Activated T-helper 2 cell treated with anti-CD3 and anti-CD28 coated beads, Interferon-gamma antibody, Interleukin-2, Interleukin-4, amounts not matched to agents 10 μg/mL and 5 μg/mL and 100 μg/mL, durations not matched to agents 14 hours and 24 hours and 36 hours (primary cell): ENCODE measurements at regions of chr7 and their contacts with region 1.

Region 1: DNA sequence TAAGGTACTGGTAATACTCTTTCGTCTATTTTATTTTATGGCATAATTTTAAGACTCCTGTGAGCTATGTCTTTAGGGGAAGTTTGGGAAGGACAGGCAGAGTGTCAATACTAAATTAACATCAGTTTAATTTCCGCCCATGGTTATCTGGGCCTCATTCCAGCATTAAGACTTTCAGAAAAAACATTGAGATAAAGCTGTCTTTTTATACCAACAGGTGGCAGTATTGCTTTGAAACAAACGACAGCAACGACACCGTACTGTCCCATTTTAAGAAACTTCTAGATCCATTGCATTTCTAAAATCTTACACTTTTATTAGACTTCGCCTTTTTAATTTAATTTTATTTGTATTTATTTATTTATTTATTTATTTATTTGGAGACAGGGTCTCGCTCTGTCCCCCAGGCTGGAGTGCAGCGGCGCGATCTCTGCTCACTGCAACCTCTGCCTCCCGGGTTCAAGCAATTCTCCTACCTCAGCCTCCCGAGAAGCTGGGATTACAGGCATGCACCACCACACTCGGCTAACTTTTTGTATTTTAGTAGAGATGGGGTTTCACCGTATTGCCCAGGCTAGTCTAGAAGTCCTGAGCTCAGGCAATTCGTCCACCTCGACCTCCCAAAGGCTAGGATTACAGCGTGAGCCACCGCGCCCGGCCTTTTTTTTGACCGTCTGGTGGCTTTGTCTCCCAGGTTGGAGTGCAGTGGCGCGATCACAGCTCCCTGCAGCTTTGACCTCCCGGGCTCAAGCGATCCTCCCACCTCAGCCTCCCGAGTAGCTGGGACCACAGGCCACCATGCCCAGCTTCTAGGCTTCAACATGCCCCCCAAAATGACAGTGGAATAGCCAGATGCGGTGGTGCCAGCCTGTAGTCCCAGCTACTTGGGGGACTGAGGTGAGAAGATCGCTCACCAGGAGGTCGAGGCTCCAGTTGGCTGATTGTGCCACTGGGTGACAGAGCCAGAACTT is 78.7 kb upstream of the C1GALT1 start:
- DNase-seq: no peak
- H3K4me3 Mint-ChIP-seq: no peak overlapping the region
- H3K27ac Mint-ChIP-seq: no peak overlapping the region
- H3K4me1 Mint-ChIP-seq: peaks cover 21% of the 10 kb centered on the region
- H3K27me3 Mint-ChIP-seq: peaks cover 12% of the 10 kb centered on the region

Region 2: DNA sequence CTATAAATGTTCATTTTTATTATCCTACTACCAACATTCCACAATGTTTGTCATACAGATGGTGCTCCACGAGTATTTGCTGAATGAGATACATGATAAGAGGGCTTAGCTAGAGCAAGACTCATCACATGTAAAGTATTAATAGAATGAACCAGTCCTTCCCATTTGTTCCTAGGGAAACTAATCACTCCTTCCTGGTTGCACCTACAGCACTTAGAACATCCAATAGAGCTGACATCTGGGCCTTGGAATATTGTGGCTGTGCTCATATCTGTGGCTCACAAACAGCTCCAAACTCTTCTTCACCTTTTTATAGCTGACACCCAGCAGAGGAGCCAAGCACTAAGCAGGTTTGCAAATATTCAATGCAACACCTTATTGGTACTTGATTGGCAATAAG is 13.2 kb before region 1 on chr7:
- intact Hi-C with region 1: no loop called
- DNase-seq: no peak
- H3K4me3 Mint-ChIP-seq: no peak overlapping the region
- H3K27ac Mint-ChIP-seq: no peak overlapping the region
- H3K4me1 Mint-ChIP-seq: no peaks in the 10 kb centered on the region
- H3K27me3 Mint-ChIP-seq: peaks cover 21% of the 10 kb centered on the region

Region 3: DNA sequence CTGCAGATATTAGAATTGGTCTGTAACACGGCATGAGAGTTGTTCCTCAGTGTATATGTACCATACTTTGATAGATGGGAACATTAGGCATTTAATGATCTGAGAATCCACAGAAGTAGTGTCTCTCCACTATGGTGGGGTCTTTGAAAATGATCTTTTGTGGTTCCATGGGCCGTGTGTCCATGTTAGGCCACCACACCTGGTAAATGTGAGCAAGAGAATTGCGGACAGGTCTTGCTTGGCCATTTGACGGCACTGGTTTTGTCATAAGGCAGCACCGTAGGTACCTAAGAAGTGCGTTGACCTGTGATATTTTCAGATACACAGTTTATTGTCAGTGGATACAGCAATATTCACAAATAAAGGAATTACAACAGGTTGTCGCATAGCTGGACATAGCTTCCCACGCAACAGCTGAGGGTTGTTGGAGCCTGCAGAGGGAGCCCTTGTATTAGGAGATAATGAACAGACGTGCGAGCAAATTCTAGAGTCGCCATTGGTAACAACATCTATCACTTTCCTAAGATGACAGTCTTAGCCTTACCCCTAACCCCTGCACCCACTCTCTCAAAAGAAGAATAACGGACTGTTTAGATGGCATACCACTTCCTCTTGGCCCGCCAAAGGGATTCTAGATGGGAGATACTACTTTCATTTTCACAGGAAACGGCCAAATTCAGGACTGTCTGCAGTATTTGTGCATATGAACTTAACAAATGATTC is 320.7 kb after region 1 on chr7:
- intact Hi-C with region 1: loop called (anchors 10 kb)
- DNase-seq: peak; percentile 12
- H3K4me3 Mint-ChIP-seq: peak overlapping the region; percentile 60
- H3K27ac Mint-ChIP-seq: no peak overlapping the region
- H3K4me1 Mint-ChIP-seq: peaks cover 9% of the 10 kb centered on the region
- H3K27me3 Mint-ChIP-seq: peaks cover 16% of the 10 kb centered on the region

Region 4: GRCh38 chr7:7542251-7542835 is 438.7 kb after region 1 on chr7:
- intact Hi-C with region 1: loop called (anchors 2 kb)
- DNase-seq: no peak
- H3K4me3 Mint-ChIP-seq: no peak overlapping the region
- H3K27ac Mint-ChIP-seq: no peak overlapping the region
- H3K4me1 Mint-ChIP-seq: peaks cover 2% of the 10 kb centered on the region
- H3K27me3 Mint-ChIP-seq: peaks cover 23% of the 10 kb centered on the region